CD8-positive, alpha-beta T cell (primary cell): ENCODE measurements at regions of chr11 and their contacts with region 1.

Region 1: GRCh38 chr11:37182031-37182430 is 584.0 kb upstream of the RAG2 start:
- DNase-seq: no peak
- ATAC-seq: no peak
- H3K4me3 ChIP-seq: no peak overlapping the region
- H3K4me3 Mint-ChIP-seq: no peak overlapping the region
- H3K27ac ChIP-seq: no peak overlapping the region
- H3K27ac Mint-ChIP-seq: no peak overlapping the region
- H3K4me1 ChIP-seq: no peaks in the 10 kb centered on the region
- H3K4me1 Mint-ChIP-seq: no peaks in the 10 kb centered on the region
- H3K27me3 ChIP-seq: no peaks in the 10 kb centered on the region
- H3K27me3 Mint-ChIP-seq: no peaks in the 10 kb centered on the region
- CTCF ChIP-seq: no peak

Region 2: GRCh38 chr11:37087650-37088568 is 94.1 kb before region 1 on chr11:
- CTCF ChIA-PET with region 1: no interaction called
- POLR2A ChIA-PET with region 1: no interaction called
- intact Hi-C with region 1: no loop called
- DNase-seq: no peak
- ATAC-seq: no peak
- H3K4me3 ChIP-seq: no peak overlapping the region
- H3K4me3 Mint-ChIP-seq: no peak overlapping the region
- H3K27ac ChIP-seq: no peak overlapping the region
- H3K27ac Mint-ChIP-seq: no peak overlapping the region
- H3K4me1 ChIP-seq: no peaks in the 10 kb centered on the region
- H3K4me1 Mint-ChIP-seq: no peaks in the 10 kb centered on the region
- H3K27me3 ChIP-seq: no peaks in the 10 kb centered on the region
- H3K27me3 Mint-ChIP-seq: no peaks in the 10 kb centered on the region
- CTCF ChIP-seq: no peak

Region 3: DNA sequence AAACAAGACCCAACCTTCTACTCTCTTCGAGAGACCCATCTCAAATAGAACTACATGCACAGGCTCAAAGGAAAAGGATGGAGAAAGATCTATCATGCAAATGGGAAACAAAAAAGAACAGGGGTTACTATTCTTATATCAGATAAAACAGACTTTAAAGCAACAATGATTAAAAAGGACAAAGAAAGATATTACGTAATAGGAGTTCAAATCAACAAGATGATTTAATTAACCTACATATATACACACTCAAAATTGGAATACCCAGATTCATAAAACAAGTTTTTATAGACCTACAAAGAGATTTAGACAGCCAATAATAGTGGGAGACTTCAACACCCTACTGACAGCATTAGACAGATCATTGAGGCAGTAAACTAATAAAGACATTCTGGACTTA is 47.4 kb before region 1 on chr11:
- CTCF ChIA-PET with region 1: no interaction called
- POLR2A ChIA-PET with region 1: no interaction called
- intact Hi-C with region 1: loop called in 1 of 2 experiments (anchors 10 kb)
- DNase-seq: no peak
- ATAC-seq: no peak
- H3K4me3 ChIP-seq: no peak overlapping the region
- H3K4me3 Mint-ChIP-seq: no peak overlapping the region
- H3K27ac ChIP-seq: no peak overlapping the region
- H3K27ac Mint-ChIP-seq: no peak overlapping the region
- H3K4me1 ChIP-seq: no peaks in the 10 kb centered on the region
- H3K4me1 Mint-ChIP-seq: no peaks in the 10 kb centered on the region
- H3K27me3 ChIP-seq: no peaks in the 10 kb centered on the region
- H3K27me3 Mint-ChIP-seq: no peaks in the 10 kb centered on the region
- CTCF ChIP-seq: no peak